Naive thymus-derived CD4-positive, alpha-beta T cell (primary cell): ENCODE measurements at regions of chr16 and their contacts with region 1.

Region 1: DNA sequence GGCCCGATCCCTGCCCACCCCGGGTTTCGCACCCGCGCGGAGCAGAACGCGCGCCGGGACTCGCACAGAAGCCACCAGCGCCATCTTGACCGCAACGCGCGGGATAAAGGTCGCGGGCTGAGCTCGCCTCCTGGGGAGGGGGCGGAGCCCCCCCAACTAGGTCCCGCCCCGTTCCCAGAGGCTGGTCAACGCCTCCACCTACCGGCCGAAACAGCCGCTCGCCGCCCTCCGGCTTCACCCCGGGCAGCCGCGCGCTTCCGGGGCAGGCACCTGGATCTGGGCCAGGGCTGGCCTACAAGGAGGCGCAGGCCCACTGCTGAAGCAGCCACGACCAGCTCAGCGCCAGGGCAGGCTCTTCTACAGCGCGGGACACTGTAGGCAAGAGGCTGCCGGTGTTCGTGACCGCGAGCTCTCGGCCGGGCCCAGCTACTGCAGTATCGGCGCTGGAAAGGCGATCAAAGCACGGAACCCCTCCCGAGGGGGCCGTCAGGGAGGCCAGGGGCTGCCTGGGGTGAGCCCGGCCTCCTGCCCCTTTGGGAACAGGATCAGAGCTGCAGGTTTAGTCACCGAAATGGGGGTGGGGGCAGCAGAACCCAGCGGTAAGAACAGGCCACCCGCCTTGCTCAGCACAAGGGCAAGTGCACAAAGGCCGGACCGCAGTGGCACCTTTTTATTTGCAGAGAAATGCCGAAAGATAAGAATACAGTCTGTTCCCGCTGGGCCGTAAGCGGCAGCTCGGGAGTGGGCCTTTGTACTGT is at the start of gene ECI1:
- DNase-seq: peak; percentile 48 to 90 (median 62)
- ATAC-seq: peak; percentile 91
- H3K4me3 ChIP-seq: peak within 1 kb of the TSS; percentile 62
- H3K4me3 Mint-ChIP-seq: peak within 1 kb of the TSS; percentile 85 to 94 (median 89)
- H3K27ac ChIP-seq: peak within 1 kb of the TSS; percentile 76
- H3K27ac Mint-ChIP-seq: peak within 1 kb of the TSS; percentile 85 to 94 (median 91)
- H3K4me1 ChIP-seq: peaks cover 7% of the 10 kb centered on the region in 2 donors
- H3K4me1 Mint-ChIP-seq: peaks cover 0 to 12% (median 7%) of the 10 kb centered on the region in 7 donors
- H3K27me3 ChIP-seq: no peaks in the 10 kb centered on the region
- H3K27me3 Mint-ChIP-seq: no peaks in the 10 kb centered on the region
- total RNA-seq, gene ECI1: 19.9 to 29.3 (median 26.8) TPM

Region 2: GRCh38 chr16:1782352-1783091 is 469.1 kb before region 1 on chr16 and contains the starts of genes NUBP2 and SPSB3:
- CTCF ChIA-PET with region 1: no interaction called
- POLR2A ChIA-PET with region 1: no interaction called
- intact Hi-C with region 1: no loop called
- DNase-seq: peak; percentile 83 to 98 (median 97)
- ATAC-seq: peak; percentile 92
- H3K4me3 ChIP-seq: peak within 1 kb of the TSS; percentile 92
- H3K4me3 Mint-ChIP-seq: peak within 1 kb of the TSS; percentile 90 to 98 (median 94)
- H3K27ac ChIP-seq: peak within 1 kb of the TSS; percentile 76
- H3K27ac Mint-ChIP-seq: peak within 1 kb of the TSS; percentile 77 to 98 (median 93)
- H3K4me1 ChIP-seq: peaks cover 13 to 28% of the 10 kb centered on the region in 2 donors
- H3K4me1 Mint-ChIP-seq: peaks cover 0 to 48% (median 22%) of the 10 kb centered on the region in 7 donors
- H3K27me3 ChIP-seq: no peaks in the 10 kb centered on the region
- H3K27me3 Mint-ChIP-seq: peaks cover 0 to 2% (median 0%) of the 10 kb centered on the region in 5 donors
- total RNA-seq, gene NUBP2: 39.3 to 60.2 (median 48.6) TPM
- total RNA-seq, gene SPSB3: 38.2 to 127 (median 72.3) TPM

Region 3: GRCh38 chr16:2205104-2205966 is 46.3 kb before region 1 on chr16 and contains the start of gene MLST8:
- CTCF ChIA-PET with region 1: interaction called, 3 read pairs
- POLR2A ChIA-PET with region 1: interaction called, 5 read pairs
- intact Hi-C with region 1: loop called in 1 of 2 experiments (anchors 1 kb)
- DNase-seq: peak; percentile 88 to 100 (median 98)
- ATAC-seq: peak; percentile 97
- H3K4me3 ChIP-seq: peak within 1 kb of the TSS; percentile 93
- H3K4me3 Mint-ChIP-seq: peak within 1 kb of the TSS; percentile 80 to 95 (median 88)
- H3K27ac ChIP-seq: peak within 1 kb of the TSS; percentile 97
- H3K27ac Mint-ChIP-seq: peak within 1 kb of the TSS; percentile 70 to 91 (median 86)
- H3K4me1 ChIP-seq: peaks cover 11 to 13% of the 10 kb centered on the region in 2 donors
- H3K4me1 Mint-ChIP-seq: peaks cover 7 to 29% (median 21%) of the 10 kb centered on the region in 7 donors
- H3K27me3 ChIP-seq: no peaks in the 10 kb centered on the region
- H3K27me3 Mint-ChIP-seq: peaks cover 0 to 11% (median 0%) of the 10 kb centered on the region in 5 donors
- total RNA-seq, gene MLST8: 25.1 to 41.2 (median 35.5) TPM